Mammary epithelial cell (primary cell): ENCODE measurements at regions of chr17 and their contacts with region 1.

Region 1: GRCh38 chr17:41738077-41738735 is 3.8 kb upstream of the HAP1 start:
- DNase-seq: peak; percentile 65
- H3K4me3 ChIP-seq: no peak overlapping the region
- H3K27ac ChIP-seq: peak overlapping the region; percentile 81
- H3K4me1 ChIP-seq: peaks cover 38% of the 10 kb centered on the region
- H3K27me3 ChIP-seq: no peaks in the 10 kb centered on the region
- CTCF ChIP-seq: peak; percentile 94 to 96

Region 2: DNA sequence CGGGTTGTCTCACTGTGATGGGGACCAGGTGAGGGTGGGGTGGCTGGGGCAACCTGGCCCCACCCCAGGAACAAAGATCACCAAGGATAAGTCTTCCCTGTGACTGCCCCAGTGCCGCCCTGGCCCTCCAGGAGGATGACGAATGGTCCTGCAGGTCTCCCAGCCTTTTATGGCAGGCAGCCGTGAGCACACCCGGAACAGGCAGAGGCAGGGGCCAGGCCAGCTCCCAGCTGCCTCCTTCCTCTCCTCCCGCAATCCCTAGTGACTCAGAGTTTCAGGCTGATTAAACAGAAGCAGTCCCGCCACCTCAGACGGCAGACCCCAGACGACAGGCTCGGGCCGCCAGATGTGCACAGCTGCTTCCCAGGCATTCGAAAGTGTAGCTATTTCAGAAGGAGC is 35.0 kb after region 1 on chr17:
- CTCF ChIA-PET with region 1: no interaction called
- dilution Hi-C with region 1: no loop called
- in situ Hi-C with region 1: no loop called
- intact Hi-C with region 1: loop called (anchors 1 kb)
- DNase-seq: peak; percentile 99
- H3K4me3 ChIP-seq: no peak overlapping the region
- H3K27ac ChIP-seq: peak overlapping the region; percentile 93
- H3K4me1 ChIP-seq: peaks cover 63% of the 10 kb centered on the region
- H3K27me3 ChIP-seq: no peaks in the 10 kb centered on the region
- CTCF ChIP-seq: no peak

Region 3: GRCh38 chr17:41796121-41796895 is 58.1 kb after region 1 on chr17:
- CTCF ChIA-PET with region 1: no interaction called
- dilution Hi-C with region 1: loop called (anchors 5 kb)
- in situ Hi-C with region 1: loop called (anchors 5 kb)
- intact Hi-C with region 1: loop called (anchors 1 kb)
- DNase-seq: peak; percentile 35
- H3K4me3 ChIP-seq: no peak overlapping the region
- H3K27ac ChIP-seq: no peak overlapping the region
- H3K4me1 ChIP-seq: peaks cover 43% of the 10 kb centered on the region
- H3K27me3 ChIP-seq: no peaks in the 10 kb centered on the region
- CTCF ChIP-seq: no peak

Region 4: GRCh38 chr17:41811549-41812380 is 73.6 kb after region 1 on chr17 and contains the start of gene P3H4:
- CTCF ChIA-PET with region 1: no interaction called
- dilution Hi-C with region 1: no loop called
- in situ Hi-C with region 1: no loop called
- intact Hi-C with region 1: loop called (anchors 1 kb)
- DNase-seq: peak; percentile 79
- H3K4me3 ChIP-seq: peak within 1 kb of the TSS; percentile 66 to 81 (median 69)
- H3K27ac ChIP-seq: peak within 1 kb of the TSS; percentile 61
- H3K4me1 ChIP-seq: peaks cover 25% of the 10 kb centered on the region
- H3K27me3 ChIP-seq: no peaks in the 10 kb centered on the region
- CTCF ChIP-seq: peak; percentile 39 to 79
- total RNA-seq, gene P3H4: 30.5 to 42.3 TPM

Region 5: DNA sequence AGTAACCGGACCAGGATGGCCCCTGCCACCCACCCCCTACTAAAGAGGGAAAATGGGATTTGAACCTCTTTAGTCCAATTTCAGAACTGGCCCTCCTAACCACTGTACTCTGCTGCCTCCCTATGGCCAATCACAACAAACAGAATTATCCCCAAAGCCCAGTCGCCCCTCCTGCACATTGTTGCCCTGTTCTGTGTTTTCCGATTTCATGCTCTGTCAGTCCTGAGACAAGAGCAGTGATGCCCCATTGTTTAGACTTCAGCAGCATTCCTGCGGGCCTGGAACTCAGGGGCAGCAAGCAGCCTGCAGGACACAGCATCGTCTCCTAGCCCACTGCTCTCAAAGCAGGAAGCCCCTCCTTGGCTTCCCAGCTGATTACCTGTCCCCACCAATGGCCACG is 147.5 kb after region 1 on chr17:
- CTCF ChIA-PET with region 1: no interaction called
- dilution Hi-C with region 1: no loop called
- in situ Hi-C with region 1: no loop called
- intact Hi-C with region 1: loop called (anchors 1 kb)
- DNase-seq: no peak
- H3K4me3 ChIP-seq: no peak overlapping the region
- H3K27ac ChIP-seq: no peak overlapping the region
- H3K4me1 ChIP-seq: no peaks in the 10 kb centered on the region
- H3K27me3 ChIP-seq: no peaks in the 10 kb centered on the region
- CTCF ChIP-seq: peak; percentile 5 to 20

Region 6: GRCh38 chr17:41959336-41960095 is 221.3 kb after region 1 on chr17:
- CTCF ChIA-PET with region 1: interaction called, 4 read pairs
- dilution Hi-C with region 1: no loop called
- in situ Hi-C with region 1: no loop called
- intact Hi-C with region 1: loop called (anchors 1 kb)
- DNase-seq: peak; percentile 55
- H3K4me3 ChIP-seq: no peak overlapping the region
- H3K27ac ChIP-seq: no peak overlapping the region
- H3K4me1 ChIP-seq: peaks cover 10% of the 10 kb centered on the region
- H3K27me3 ChIP-seq: no peaks in the 10 kb centered on the region
- CTCF ChIP-seq: peak; percentile 50 to 65

Region 7: DNA sequence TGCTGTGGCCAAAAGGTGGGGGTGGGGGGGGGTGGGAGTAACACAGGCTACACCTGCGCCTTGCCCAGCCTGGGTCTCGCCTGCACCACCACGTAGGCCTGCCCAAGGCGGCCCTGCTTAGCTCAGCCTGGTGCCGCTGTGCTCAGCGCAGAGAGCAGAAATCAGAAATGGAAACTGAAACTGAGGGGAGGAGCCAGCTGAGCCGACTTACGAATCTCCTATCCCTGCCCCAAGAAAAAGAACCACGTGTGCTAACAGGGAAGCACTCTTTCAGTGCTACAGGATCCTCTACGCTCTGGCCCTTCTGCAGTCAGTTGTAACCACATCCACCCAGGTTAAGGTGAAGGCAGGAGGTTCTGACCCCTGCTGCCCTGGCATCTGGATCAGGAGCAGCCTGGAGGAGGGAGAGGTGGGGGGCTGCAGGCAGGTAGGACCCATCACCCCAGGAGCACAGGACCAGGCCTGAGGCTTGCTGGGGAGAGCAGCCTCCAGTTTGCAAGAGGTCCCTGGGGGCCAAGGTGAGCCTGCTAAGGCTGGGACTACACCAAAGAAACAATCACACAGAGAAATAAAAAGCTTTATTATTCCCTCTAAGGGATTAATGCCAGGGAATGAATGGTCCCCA is 374.5 kb after region 1 on chr17 and contains the start of gene DHX58:
- CTCF ChIA-PET with region 1: no interaction called
- dilution Hi-C with region 1: no loop called
- in situ Hi-C with region 1: loop called in 1 of 2 experiments (anchors 25 kb)
- intact Hi-C with region 1: loop called (anchors 5 kb)
- DNase-seq: peak; percentile 80
- H3K4me3 ChIP-seq: peak within 1 kb of the TSS; percentile 43 to 62 (median 49)
- H3K27ac ChIP-seq: peak within 1 kb of the TSS; percentile 41
- H3K4me1 ChIP-seq: peaks cover 16% of the 10 kb centered on the region
- H3K27me3 ChIP-seq: no peaks in the 10 kb centered on the region
- CTCF ChIP-seq: no peak
- total RNA-seq, gene DHX58: 11.7 to 12.2 TPM